B cell (primary cell): ENCODE measurements at regions of chr11 and their contacts with region 1.

Region 1: DNA sequence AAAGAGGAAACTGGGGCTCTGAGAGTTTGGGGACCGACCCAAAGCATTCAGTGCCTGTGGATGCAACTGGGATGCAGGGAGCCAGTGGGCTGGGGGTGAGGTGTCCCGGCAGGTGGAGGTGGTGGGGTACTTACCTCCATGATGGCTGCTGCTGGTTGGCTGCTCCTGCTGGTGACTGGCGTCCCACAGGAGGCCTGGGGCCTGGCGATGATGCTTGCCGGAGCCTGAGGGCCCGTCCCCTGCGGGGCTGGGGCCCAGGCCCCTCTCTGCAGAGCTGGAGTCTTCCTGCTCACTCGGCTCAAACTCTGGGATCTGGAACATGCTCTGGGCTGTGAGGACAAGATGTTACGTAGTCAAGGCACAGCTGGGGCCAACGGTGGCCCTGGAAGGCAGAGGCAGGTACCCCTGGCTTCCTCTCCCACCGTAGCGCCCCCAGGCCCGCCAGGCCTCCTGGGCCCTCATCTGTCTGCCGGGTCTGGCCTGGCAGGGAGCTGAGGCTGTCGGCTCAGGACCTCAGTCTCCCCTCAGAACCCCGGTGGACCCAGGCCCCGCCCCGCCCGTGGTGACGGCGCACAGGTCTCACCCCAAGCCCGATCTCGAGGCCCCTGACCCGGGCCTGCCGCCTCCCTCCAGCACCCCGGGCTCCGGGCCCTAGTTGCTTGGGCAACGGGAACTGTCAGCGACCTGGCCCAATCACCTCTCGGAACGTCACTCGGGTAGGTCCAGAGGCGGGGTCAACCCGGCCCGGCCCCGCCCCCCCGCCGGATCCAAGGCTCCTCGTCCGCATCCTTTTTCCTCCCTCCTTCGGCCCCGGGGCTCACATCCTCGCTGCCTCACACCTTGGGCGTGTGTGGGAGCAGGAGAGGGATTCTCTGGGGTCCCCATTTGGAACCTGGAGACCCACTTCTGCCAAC is at the start of gene BAD:
- DNase-seq: peak; percentile 96
- ATAC-seq: peak; percentile 77
- H3K4me3 ChIP-seq: peak within 1 kb of the TSS; percentile 61 to 97 (median 90)
- H3K4me3 Mint-ChIP-seq: peak within 1 kb of the TSS; percentile 90
- H3K27ac ChIP-seq: peak within 1 kb of the TSS; percentile 100
- H3K27ac Mint-ChIP-seq: peak within 1 kb of the TSS; percentile 96
- H3K4me1 ChIP-seq: peaks cover 13 to 18% of the 10 kb centered on the region in 2 donors
- H3K4me1 Mint-ChIP-seq: peaks cover 20% of the 10 kb centered on the region
- H3K27me3 ChIP-seq: no peaks in the 10 kb centered on the region
- H3K27me3 Mint-ChIP-seq: no peaks in the 10 kb centered on the region
- CTCF ChIP-seq: no peak
- total RNA-seq, gene BAD: 24.0 and 25.0 TPM in 2 replicates

Region 2: DNA sequence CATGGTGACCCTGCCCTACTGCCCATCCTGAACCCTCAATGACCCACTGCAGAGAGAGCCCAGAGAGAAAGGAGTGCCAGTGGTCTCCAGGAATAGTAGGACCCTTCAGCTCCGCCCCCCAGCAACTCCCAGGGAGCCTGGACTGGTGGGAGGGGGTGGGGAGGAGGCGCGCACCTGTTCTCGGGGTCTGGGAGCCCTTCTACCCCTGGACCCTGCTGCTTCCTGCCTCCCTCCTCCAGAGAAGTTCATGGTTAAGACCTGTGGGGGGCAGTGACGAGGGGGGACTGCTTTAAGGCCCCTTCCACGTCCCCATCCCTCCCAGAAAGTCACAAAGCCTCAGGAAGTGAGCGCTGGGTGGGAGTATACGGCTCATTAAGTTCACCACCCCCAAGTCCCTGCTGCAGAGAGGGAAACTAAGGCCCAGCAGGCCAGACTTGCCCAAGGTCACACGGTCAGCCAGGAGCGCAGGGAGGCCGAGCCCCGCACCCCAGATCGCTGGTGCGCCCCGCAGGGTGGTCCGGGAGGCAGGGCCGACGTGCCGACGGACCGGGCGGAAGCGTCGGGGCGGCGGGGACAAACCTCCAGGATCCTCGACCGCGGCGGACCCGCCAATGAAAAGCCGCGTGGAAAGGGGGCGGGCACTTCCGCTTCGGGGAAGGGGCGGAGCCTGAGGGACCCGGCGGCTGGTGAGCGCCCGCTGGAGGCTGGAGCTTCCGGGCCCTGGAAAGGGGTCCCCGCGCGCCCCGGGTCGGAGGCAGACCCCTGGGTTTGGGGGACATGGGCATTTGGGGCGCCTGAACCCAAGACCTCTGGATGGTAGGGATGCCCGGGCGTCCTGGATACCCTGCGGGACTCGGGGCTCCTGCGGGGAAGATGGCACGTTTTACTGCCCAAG is 58.4 kb before region 1 on chr11 and contains the starts of genes NUDT22 and TRPT1:
- CTCF ChIA-PET with region 1: no interaction called
- POLR2A ChIA-PET with region 1: interaction called, 3 read pairs
- intact Hi-C with region 1: loop called (anchors 2 kb)
- DNase-seq: peak; percentile 91
- ATAC-seq: peak; percentile 53
- H3K4me3 ChIP-seq: peak within 1 kb of the TSS; percentile 64 to 97 (median 92)
- H3K4me3 Mint-ChIP-seq: peak within 1 kb of the TSS; percentile 91
- H3K27ac ChIP-seq: peak within 1 kb of the TSS; percentile 82 to 86
- H3K27ac Mint-ChIP-seq: peak within 1 kb of the TSS; percentile 93
- H3K4me1 ChIP-seq: peaks cover 26 to 41% of the 10 kb centered on the region in 2 donors
- H3K4me1 Mint-ChIP-seq: peaks cover 43% of the 10 kb centered on the region
- H3K27me3 ChIP-seq: no peaks in the 10 kb centered on the region
- H3K27me3 Mint-ChIP-seq: no peaks in the 10 kb centered on the region
- CTCF ChIP-seq: peak; percentile 63
- total RNA-seq, gene NUDT22: 97.2 and 104 TPM in 2 replicates
- total RNA-seq, gene TRPT1: 59.6 and 62.0 TPM in 2 replicates

Region 3: GRCh38 chr11:64240394-64241174 is 43.7 kb before region 1 on chr11 and contains the start of gene FKBP2:
- CTCF ChIA-PET with region 1: interaction called, 5 read pairs
- POLR2A ChIA-PET with region 1: interaction called, 5 read pairs
- intact Hi-C with region 1: loop called (anchors 2 kb)
- DNase-seq: peak; percentile 99
- ATAC-seq: peak; percentile 58
- H3K4me3 ChIP-seq: peak within 1 kb of the TSS in 4 of 5 experiments; percentile 76 to 91 (median 83)
- H3K4me3 Mint-ChIP-seq: peak within 1 kb of the TSS; percentile 91
- H3K27ac ChIP-seq: peak within 1 kb of the TSS; percentile 98
- H3K27ac Mint-ChIP-seq: peak within 1 kb of the TSS; percentile 97
- H3K4me1 ChIP-seq: peaks cover 31 to 63% of the 10 kb centered on the region in 2 donors
- H3K4me1 Mint-ChIP-seq: peaks cover 62% of the 10 kb centered on the region
- H3K27me3 ChIP-seq: no peaks in the 10 kb centered on the region
- H3K27me3 Mint-ChIP-seq: no peaks in the 10 kb centered on the region
- CTCF ChIP-seq: no peak
- total RNA-seq, gene FKBP2: 23.7 and 25.7 TPM in 2 replicates

Region 4: GRCh38 chr11:64246871-64247728 is 37.2 kb before region 1 on chr11 and contains the start of gene PPP1R14B:
- CTCF ChIA-PET with region 1: interaction called, 6 read pairs
- POLR2A ChIA-PET with region 1: interaction called, 7 read pairs
- intact Hi-C with region 1: loop called (anchors 1 kb)
- DNase-seq: peak; percentile 85
- ATAC-seq: peak; percentile 60
- H3K4me3 ChIP-seq: peak within 1 kb of the TSS; percentile 78 to 99 (median 88)
- H3K4me3 Mint-ChIP-seq: peak within 1 kb of the TSS; percentile 90
- H3K27ac ChIP-seq: peak within 1 kb of the TSS; percentile 53 to 79
- H3K27ac Mint-ChIP-seq: peak within 1 kb of the TSS; percentile 91
- H3K4me1 ChIP-seq: peaks cover 26 to 54% of the 10 kb centered on the region in 2 donors
- H3K4me1 Mint-ChIP-seq: peaks cover 40% of the 10 kb centered on the region
- H3K27me3 ChIP-seq: no peaks in the 10 kb centered on the region
- H3K27me3 Mint-ChIP-seq: no peaks in the 10 kb centered on the region
- CTCF ChIP-seq: no peak
- total RNA-seq, gene PPP1R14B: 39.2 and 41.2 TPM in 2 replicates